GM12878 (cell line): ENCODE measurements at regions of chr16 and their contacts with region 1.

Region 1: GRCh38 chr16:1772736-1773584 is at the starts of genes EME2 and MRPS34:
- DNase-seq: peak; percentile 17
- ATAC-seq: peak; percentile 71
- H3K4me3 ChIP-seq: peak within 1 kb of the TSS; percentile 100
- H3K27ac ChIP-seq: peak within 1 kb of the TSS; percentile 89
- H3K4me1 ChIP-seq: peaks cover 15% of the 10 kb centered on the region
- H3K27me3 ChIP-seq: no peaks in the 10 kb centered on the region
- CTCF ChIP-seq: peak; percentile 71 to 81 (median 73)
- EP300 ChIP-seq: no peak
- POLR2A ChIP-seq: peak; percentile 92
- RAD21 ChIP-seq: peak; percentile 29; the same call in 1 of the 2 replicates
- polyA plus RNA-seq, gene EME2: 0.29 to 0.80 TPM
- polyA plus RNA-seq, gene MRPS34: 3.6 to 17.9 TPM

Region 2: GRCh38 chr16:1713933-1714332 is 59.0 kb before region 1 on chr16:
- CTCF ChIA-PET with region 1: no interaction called
- POLR2A ChIA-PET with region 1: no interaction called
- RAD21 ChIA-PET with region 1: no interaction called
- SMC1A ChIA-PET with region 1: no interaction called
- in situ Hi-C with region 1: loop called (anchors 5 kb)
- intact Hi-C with region 1: loop called (anchors 5 kb)
- DNase-seq: peak; percentile 39
- ATAC-seq: peak; percentile 93
- H3K4me3 ChIP-seq: peak overlapping the region; percentile 68
- H3K27ac ChIP-seq: peak overlapping the region; percentile 88
- H3K4me1 ChIP-seq: peaks cover 37% of the 10 kb centered on the region
- H3K27me3 ChIP-seq: no peaks in the 10 kb centered on the region
- CTCF ChIP-seq: no peak
- EP300 ChIP-seq: no peak
- POLR2A ChIP-seq: peak; percentile 80
- RAD21 ChIP-seq: no peak

Region 3: DNA sequence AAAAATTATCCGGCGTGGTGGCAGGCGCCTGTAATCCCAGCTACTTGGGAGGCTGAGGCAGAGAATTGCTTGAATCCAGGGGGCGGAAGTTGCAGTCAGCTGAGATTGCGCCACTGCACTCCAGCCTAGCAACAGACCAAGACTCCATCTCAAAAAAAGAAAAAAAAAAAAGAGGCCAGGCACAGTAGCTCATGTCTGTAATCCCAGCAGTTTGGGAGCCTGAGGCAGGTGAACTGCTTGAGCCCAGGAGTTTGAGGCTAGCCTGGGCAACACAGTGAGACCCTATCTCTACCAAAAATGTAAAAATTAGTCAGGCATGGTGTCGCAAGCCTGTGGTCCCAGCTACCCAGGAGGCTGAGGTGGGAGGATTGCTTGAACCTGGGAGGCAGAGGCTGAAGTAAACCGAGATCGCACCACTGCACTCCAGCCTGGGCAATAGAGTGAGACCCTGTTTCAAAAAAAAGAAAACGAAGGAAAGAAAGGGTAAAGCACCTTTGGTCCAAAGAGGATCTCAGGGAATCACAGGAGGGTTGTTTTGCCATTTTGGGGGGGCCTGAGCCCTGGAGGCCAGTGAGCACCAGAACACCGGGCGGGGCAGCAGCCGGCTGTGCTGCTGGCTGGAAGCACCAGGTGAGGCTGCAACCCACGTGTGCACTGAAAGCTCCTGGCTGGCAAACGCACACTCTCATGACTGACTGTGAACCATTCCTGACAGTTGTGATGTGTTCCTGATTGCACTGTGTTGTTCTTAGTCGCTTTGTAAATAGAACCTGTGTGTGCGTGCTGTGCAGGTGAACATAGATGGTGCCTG is 126.9 kb after region 1 on chr16:
- CTCF ChIA-PET with region 1: no interaction called
- POLR2A ChIA-PET with region 1: no interaction called
- RAD21 ChIA-PET with region 1: no interaction called
- SMC1A ChIA-PET with region 1: no interaction called
- in situ Hi-C with region 1: no loop called
- intact Hi-C with region 1: no loop called
- DNase-seq: no peak
- ATAC-seq: no peak
- H3K4me3 ChIP-seq: no peak overlapping the region
- H3K27ac ChIP-seq: no peak overlapping the region
- H3K4me1 ChIP-seq: no peaks in the 10 kb centered on the region
- H3K27me3 ChIP-seq: no peaks in the 10 kb centered on the region
- CTCF ChIP-seq: no peak
- EP300 ChIP-seq: no peak
- POLR2A ChIP-seq: no peak
- RAD21 ChIP-seq: no peak